CD4-positive, alpha-beta memory T cell (primary cell): ENCODE measurements at regions of chr2 and their contacts with region 1.

Region 1: DNA sequence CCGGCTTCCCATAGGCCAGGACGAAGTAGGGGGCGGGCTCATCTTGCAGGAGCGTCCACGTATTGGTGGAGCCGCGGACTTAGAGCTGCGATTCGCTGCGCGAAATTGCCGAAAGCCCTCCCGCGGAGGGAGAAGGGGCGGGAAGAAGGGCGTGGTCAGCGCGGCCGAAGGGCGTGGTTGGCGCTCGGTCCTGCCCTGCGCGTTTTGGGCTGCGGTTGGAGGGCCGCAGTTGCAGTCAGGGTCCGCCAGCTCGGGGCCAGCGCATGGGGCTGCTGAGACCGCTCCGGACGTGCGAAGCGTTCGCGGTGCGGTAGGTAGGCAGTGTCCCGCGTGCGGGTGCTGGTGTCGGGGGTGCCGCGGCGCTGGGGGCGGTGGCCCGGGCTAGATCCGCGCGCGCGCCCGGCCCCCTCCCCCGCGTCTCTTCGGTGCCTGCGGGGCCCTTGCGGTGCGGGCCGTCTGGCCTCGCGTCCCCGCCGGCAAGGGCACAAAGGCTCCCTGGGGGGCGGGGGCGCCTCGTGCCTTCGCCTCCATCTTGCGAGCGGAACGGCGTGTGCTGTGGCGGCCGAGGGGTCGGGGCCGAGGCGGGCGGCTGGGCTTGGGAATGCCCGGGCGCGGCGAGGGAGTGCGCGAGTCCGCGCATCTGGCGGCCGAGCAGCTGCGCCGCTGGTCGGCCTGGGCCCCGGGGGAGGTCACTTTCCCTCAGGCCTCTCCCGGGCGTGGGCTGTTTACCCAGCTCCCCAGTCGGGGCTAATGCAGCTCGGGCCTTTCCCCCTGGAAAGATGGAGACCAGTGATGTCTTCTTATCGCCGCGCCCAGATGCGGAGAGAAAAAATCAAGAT is at the start of gene CEP68:
- DNase-seq: peak; percentile 94 to 97 (median 95)
- H3K4me3 ChIP-seq: peak within 1 kb of the TSS; percentile 83 to 92
- H3K4me3 Mint-ChIP-seq: peak within 1 kb of the TSS; percentile 90 to 98 (median 97)
- H3K27ac ChIP-seq: peak within 1 kb of the TSS; percentile 67
- H3K27ac Mint-ChIP-seq: peak within 1 kb of the TSS; percentile 94 to 98 (median 97)
- H3K4me1 ChIP-seq: peaks cover 73% of the 10 kb centered on the region
- H3K4me1 Mint-ChIP-seq: peaks cover 35 to 77% (median 46%) of the 10 kb centered on the region in 4 donors
- H3K27me3 ChIP-seq: no peaks in the 10 kb centered on the region
- H3K27me3 Mint-ChIP-seq: no peaks in the 10 kb centered on the region
- total RNA-seq, gene CEP68: 57.7 to 59.9 TPM

Region 2: DNA sequence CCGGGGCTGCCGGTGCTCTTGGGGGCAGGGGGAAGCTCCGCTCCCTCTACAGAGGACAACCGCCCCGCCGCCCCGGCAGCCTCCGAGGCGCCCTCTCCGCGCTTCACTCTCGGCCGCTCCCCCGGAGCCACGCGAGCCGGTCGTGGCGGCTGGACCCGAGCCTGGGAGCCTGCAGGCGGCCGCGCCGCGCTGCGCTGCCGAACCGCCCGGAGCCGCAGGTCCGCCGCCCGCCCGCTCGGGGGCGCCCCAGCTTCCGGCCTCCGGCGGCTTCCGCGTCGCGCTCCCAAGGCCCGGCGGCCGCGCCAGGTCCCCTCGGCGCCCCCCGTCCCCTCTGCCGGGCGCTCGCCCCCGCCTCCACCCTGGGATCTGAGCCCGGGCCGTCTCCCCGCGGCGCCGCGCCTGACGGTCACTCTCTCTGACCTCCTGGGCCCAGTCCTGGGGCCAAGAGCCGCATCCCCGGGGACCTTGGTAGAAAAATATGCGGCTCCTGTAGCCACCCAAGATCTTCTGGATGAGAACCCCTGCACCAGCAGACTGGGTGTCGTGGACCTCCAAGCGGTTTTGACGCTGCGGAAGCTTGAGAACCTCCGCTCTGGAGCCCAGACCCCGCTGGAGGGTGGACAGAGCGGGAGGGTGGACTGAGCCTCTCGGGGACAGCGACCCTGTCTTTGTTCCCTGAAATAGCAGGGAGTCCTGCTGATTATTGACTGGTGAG is 447.1 kb before region 1 on chr2:
- CTCF ChIA-PET with region 1: no interaction called
- POLR2A ChIA-PET with region 1: interaction called, 3 read pairs
- intact Hi-C with region 1: loop called (anchors 10 kb)
- DNase-seq: peak; percentile 58 to 79 (median 76)
- H3K4me3 ChIP-seq: peak overlapping the region in 1 of 2 donors; percentile 61
- H3K4me3 Mint-ChIP-seq: peak overlapping the region; percentile 64 to 79 (median 75)
- H3K27ac ChIP-seq: peak overlapping the region; percentile 57
- H3K27ac Mint-ChIP-seq: peak overlapping the region; percentile 35 to 83 (median 70)
- H3K4me1 ChIP-seq: peaks cover 38% of the 10 kb centered on the region
- H3K4me1 Mint-ChIP-seq: peaks cover 10 to 33% (median 22%) of the 10 kb centered on the region in 4 donors
- H3K27me3 ChIP-seq: no peaks in the 10 kb centered on the region
- H3K27me3 Mint-ChIP-seq: no peaks in the 10 kb centered on the region

Region 3: GRCh38 chr2:64914735-64915509 is 141.5 kb before region 1 on chr2:
- CTCF ChIA-PET with region 1: interaction called, 10 read pairs
- POLR2A ChIA-PET with region 1: interaction called, 20 read pairs
- intact Hi-C with region 1: no loop called
- DNase-seq: no peak
- H3K4me3 ChIP-seq: no peak overlapping the region
- H3K4me3 Mint-ChIP-seq: no peak overlapping the region
- H3K27ac ChIP-seq: no peak overlapping the region
- H3K27ac Mint-ChIP-seq: peak overlapping the region in 1 of 7 donors; percentile 43
- H3K4me1 ChIP-seq: peaks cover 10% of the 10 kb centered on the region
- H3K4me1 Mint-ChIP-seq: peaks cover 6 to 21% (median 10%) of the 10 kb centered on the region in 4 donors
- H3K27me3 ChIP-seq: no peaks in the 10 kb centered on the region
- H3K27me3 Mint-ChIP-seq: peaks cover 0 to 1% of the 10 kb centered on the region in 2 donors

Region 4: GRCh38 chr2:65031341-65032018 is 25.0 kb before region 1 on chr2:
- CTCF ChIA-PET with region 1: interaction called, 5 read pairs
- POLR2A ChIA-PET with region 1: interaction called, 11 read pairs
- intact Hi-C with region 1: no loop called
- DNase-seq: peak in 1 of 5 donors; percentile 10
- H3K4me3 ChIP-seq: peak overlapping the region in 1 of 2 donors; percentile 13
- H3K4me3 Mint-ChIP-seq: peak overlapping the region; percentile 39 to 75 (median 65)
- H3K27ac ChIP-seq: peak overlapping the region; percentile 49
- H3K27ac Mint-ChIP-seq: peak overlapping the region; percentile 33 to 92 (median 73)
- H3K4me1 ChIP-seq: peaks cover 30% of the 10 kb centered on the region
- H3K4me1 Mint-ChIP-seq: peaks cover 23 to 26% (median 24%) of the 10 kb centered on the region in 4 donors
- H3K27me3 ChIP-seq: no peaks in the 10 kb centered on the region
- H3K27me3 Mint-ChIP-seq: no peaks in the 10 kb centered on the region

Region 5: DNA sequence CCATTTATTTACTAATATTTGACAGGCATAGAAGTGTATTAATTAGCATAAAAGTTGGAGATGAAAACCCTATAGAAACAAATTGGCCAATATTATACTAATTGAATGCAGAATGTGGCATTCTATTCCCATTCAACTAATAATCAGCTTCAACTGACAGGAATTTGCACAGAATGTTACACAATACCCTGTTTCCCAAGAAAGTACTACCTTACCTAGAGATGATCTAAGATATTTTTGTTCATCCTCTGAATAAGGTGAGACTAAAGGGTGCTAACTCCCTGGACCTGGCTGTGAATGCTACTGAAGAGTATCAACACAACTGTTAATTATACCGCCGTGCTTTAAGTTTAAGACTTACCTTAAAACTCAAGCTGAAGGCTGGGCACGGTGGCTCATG is 28.7 kb after region 1 on chr2:
- CTCF ChIA-PET with region 1: no interaction called
- POLR2A ChIA-PET with region 1: interaction called, 10 read pairs
- intact Hi-C with region 1: no loop called
- DNase-seq: no peak
- H3K4me3 ChIP-seq: no peak overlapping the region
- H3K4me3 Mint-ChIP-seq: no peak overlapping the region
- H3K27ac ChIP-seq: no peak overlapping the region
- H3K27ac Mint-ChIP-seq: peak overlapping the region in 2 of 7 donors; percentile 11 to 52
- H3K4me1 ChIP-seq: no peaks in the 10 kb centered on the region
- H3K4me1 Mint-ChIP-seq: peaks cover 5 to 16% (median 11%) of the 10 kb centered on the region in 4 donors
- H3K27me3 ChIP-seq: no peaks in the 10 kb centered on the region
- H3K27me3 Mint-ChIP-seq: no peaks in the 10 kb centered on the region

Region 6: GRCh38 chr2:65227425-65228262 is 171.2 kb after region 1 on chr2 and contains the start of gene ACTR2:
- CTCF ChIA-PET with region 1: no interaction called
- POLR2A ChIA-PET with region 1: interaction called, 15 read pairs
- intact Hi-C with region 1: loop called (anchors 2 kb)
- DNase-seq: peak; percentile 93 to 97 (median 95)
- H3K4me3 ChIP-seq: peak within 1 kb of the TSS; percentile 96 to 97
- H3K4me3 Mint-ChIP-seq: peak within 1 kb of the TSS; percentile 97 to 100 (median 99)
- H3K27ac ChIP-seq: peak within 1 kb of the TSS; percentile 100
- H3K27ac Mint-ChIP-seq: peak within 1 kb of the TSS; percentile 99 to 100 (median 99)
- H3K4me1 ChIP-seq: peaks cover 50% of the 10 kb centered on the region
- H3K4me1 Mint-ChIP-seq: peaks cover 23 to 58% (median 35%) of the 10 kb centered on the region in 4 donors
- H3K27me3 ChIP-seq: no peaks in the 10 kb centered on the region
- H3K27me3 Mint-ChIP-seq: no peaks in the 10 kb centered on the region
- total RNA-seq, gene ACTR2: 298 to 312 TPM